Breast epithelium (tissue), 4 donors: ENCODE measurements at regions of chr1 and their contacts with region 1.

Region 1: GRCh38 chr1:245901037-245901436 is 606.0 kb downstream of the SMYD3 start:
- DNase-seq: no peak
- H3K4me3 ChIP-seq: no peak overlapping the region
- H3K27ac ChIP-seq: no peak overlapping the region
- H3K4me1 ChIP-seq: no peaks in the 10 kb centered on the region
- H3K27me3 ChIP-seq: no peaks in the 10 kb centered on the region
- CTCF ChIP-seq: no peak
- POLR2A ChIP-seq: no peak

Region 2: DNA sequence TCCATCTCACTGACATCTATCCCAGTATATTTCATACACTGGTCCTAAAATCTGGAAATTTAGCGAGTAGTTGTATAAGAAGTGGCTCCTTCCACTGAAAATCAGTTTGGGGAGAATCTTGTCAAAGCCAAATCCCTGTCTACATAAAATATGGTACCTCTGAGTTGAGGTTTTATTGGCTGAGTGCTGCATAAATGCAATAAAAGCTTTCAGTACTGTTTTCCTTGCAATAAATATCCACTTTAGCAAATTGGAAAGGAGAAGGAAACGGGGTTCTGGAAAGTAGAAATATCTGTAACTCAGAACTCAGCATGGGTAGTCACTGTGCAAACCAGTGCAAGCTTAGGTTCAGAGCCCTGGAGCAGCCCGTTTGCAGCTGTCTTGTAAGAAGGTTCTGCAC is 25.9 kb after region 1 on chr1:
- intact Hi-C with region 1: loop called (anchors 1 kb)
- DNase-seq: no peak
- H3K4me3 ChIP-seq: no peak overlapping the region
- H3K27ac ChIP-seq: no peak overlapping the region
- H3K4me1 ChIP-seq: no peaks in the 10 kb centered on the region
- H3K27me3 ChIP-seq: no peaks in the 10 kb centered on the region
- CTCF ChIP-seq: no peak
- POLR2A ChIP-seq: no peak